ENCODE measurements at regions of chr17 and their contacts with region 1.

Region 1: GRCh38 chr17:28967221-28968140 is 16.2 kb upstream of the PHF12 start:
- DNase-seq: no peak
- H3K4me3 ChIP-seq: no peak overlapping the region
- H3K27ac ChIP-seq: no peak overlapping the region
- H3K27me3 ChIP-seq: peaks cover 34% of the 10 kb centered on the region
- CTCF ChIP-seq: no peak

Region 2: DNA sequence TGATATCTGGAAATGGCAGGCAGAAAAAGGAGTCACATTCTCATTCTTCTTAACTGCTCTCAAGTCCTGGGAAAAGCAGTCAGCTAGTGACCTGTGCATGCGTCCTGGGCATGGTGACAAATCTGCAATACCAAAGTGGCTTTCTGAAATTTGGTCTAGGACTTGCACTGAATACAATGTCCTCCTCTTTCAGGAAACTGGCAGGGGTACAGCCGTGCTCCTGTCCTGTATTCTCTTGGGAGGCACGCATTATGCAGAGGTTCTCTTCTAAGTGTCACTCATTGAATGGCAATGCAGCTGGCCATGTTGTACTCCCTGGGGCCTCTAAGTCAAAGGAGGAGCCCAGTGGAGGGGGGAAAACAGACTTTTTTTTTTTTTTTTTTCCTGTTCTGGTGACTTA is 26.8 kb before region 1 on chr17:
- CTCF ChIA-PET with region 1: no interaction called
- POLR2A ChIA-PET with region 1: no interaction called
- DNase-seq: no peak
- H3K4me3 ChIP-seq: no peak overlapping the region
- H3K27ac ChIP-seq: no peak overlapping the region
- H3K27me3 ChIP-seq: no peaks in the 10 kb centered on the region
- CTCF ChIP-seq: no peak

Region 3: GRCh38 chr17:28951991-28952975 is 15.2 kb before region 1 on chr17:
- CTCF ChIA-PET with region 1: interaction called, 14 read pairs
- POLR2A ChIA-PET with region 1: interaction called, 6 read pairs
- DNase-seq: peak; percentile 99
- H3K4me3 ChIP-seq: peak overlapping the region; percentile 77
- H3K27ac ChIP-seq: peak overlapping the region; percentile 98
- H3K27me3 ChIP-seq: no peaks in the 10 kb centered on the region
- CTCF ChIP-seq: no peak

Region 4: DNA sequence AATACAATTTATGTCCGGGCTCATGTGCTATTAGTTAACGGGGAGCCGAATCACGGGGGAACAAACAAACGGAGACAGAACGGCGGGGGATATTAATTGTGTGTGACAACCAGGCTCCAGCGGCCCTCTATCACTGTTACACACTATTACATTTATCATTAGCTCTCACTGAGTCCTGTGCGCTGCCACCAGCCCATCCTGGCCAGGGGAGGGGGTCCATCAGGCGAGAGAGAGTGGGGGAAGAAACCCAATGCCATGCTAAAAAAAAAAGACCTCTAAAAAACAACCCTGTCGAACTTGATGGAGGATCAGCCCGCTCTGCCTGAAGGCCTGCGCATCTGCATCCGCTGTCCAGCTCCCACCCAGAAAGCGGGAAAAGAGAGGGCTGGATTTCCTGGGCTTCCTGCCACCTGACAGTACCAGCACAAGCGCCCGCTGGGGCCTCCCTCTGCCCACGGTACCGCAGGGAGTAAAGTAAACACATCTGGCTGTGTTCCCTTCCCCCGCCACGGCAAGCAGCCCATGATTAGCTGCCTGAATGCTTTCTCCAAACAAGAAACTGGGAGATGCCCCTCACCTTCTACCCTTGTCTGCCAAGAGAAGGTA is 117.2 kb after region 1 on chr17:
- CTCF ChIA-PET with region 1: interaction called, 12 read pairs
- POLR2A ChIA-PET with region 1: no interaction called
- DNase-seq: peak; percentile 7
- H3K4me3 ChIP-seq: no peak overlapping the region
- H3K27ac ChIP-seq: no peak overlapping the region
- H3K27me3 ChIP-seq: no peaks in the 10 kb centered on the region
- CTCF ChIP-seq: no peak

Region 5: DNA sequence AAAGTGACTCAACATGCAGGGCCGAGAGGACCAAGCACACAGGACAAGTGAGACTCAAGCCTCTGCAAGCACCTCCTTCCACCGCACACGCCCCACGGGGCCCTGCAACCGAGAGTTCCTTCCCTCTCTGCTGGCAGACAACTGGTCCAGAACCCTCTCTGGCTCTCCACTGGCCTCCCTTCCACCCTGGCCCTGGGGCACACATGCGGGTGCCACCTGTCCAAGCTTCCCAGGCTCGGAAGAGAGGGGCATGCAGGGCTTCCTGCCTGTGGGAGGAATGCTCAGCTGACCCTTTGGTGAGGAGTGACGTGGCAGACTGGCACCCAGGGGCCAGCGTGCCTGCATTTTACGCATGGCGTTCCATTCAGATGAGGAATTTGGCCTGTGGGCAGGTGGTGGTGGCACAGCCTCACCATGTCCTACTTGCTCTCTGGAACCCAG is 135.3 kb after region 1 on chr17:
- CTCF ChIA-PET with region 1: interaction called, 10 read pairs
- POLR2A ChIA-PET with region 1: no interaction called
- DNase-seq: no peak
- H3K4me3 ChIP-seq: no peak overlapping the region
- H3K27ac ChIP-seq: no peak overlapping the region
- H3K27me3 ChIP-seq: no peaks in the 10 kb centered on the region
- CTCF ChIP-seq: no peak

Region 6: GRCh38 chr17:29111816-29112499 is 144.5 kb after region 1 on chr17:
- CTCF ChIA-PET with region 1: interaction called, 218 read pairs
- POLR2A ChIA-PET with region 1: interaction called, 8 read pairs
- DNase-seq: no peak
- H3K4me3 ChIP-seq: no peak overlapping the region
- H3K27ac ChIP-seq: no peak overlapping the region
- H3K27me3 ChIP-seq: no peaks in the 10 kb centered on the region
- CTCF ChIP-seq: peak; percentile 99

Region 7: DNA sequence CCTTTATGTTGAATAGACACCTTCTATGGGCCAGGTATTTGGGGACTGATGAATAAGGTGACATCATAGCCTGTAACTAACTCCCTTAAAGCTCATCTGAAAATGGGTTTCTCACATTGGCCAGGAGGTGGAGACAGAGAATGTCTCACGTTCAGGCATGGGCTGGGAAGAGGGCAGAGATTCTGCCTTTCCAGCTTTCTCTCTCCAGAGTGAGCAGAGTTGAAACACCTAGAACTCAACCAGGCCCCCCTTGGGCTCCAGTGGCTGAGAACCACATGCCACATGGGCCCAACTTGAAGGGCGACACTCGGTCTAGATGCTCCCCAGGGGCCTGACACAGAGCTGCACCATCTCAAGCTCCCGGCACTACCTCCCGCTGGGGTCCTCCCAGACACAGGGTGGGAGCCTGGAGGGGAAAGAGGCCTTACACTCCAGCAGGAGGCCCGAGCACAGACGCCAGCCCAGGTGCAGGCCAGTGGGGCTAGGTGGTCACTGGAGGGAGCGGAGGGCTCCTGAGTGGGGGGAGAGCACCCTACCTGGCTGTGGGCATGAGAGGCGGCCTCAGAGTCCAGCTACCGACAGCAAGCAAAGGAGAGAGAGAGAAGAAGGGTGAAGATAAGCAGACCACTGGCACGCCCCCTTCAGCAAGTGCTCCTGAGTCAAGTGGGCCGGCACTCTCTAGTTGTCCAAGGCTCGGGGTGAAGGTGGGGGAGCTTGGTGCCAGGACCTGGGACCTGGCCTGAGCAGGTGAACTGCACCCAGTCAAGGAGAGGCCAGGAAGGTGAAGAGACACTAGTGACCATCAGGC is 156.8 kb after region 1 on chr17:
- CTCF ChIA-PET with region 1: interaction called, 152 read pairs
- POLR2A ChIA-PET with region 1: no interaction called
- DNase-seq: no peak
- H3K4me3 ChIP-seq: no peak overlapping the region
- H3K27ac ChIP-seq: peak overlapping the region; percentile 31
- H3K27me3 ChIP-seq: no peaks in the 10 kb centered on the region
- CTCF ChIP-seq: peak; percentile 83